Vagina (tissue), 2 donors: ENCODE measurements at regions of chr5 and their contacts with region 1.

Region 1: GRCh38 chr5:116766470-116766947 is 191.9 kb upstream of the SEMA6A start:
- DNase-seq: peak in 1 of 2 donors; percentile 93
- H3K4me3 ChIP-seq: no peak overlapping the region
- H3K27ac ChIP-seq: no peak overlapping the region
- H3K4me1 ChIP-seq: peaks cover 8% of the 10 kb centered on the region
- H3K27me3 ChIP-seq: no peaks in the 10 kb centered on the region
- CTCF ChIP-seq: no peak
- POLR2A ChIP-seq: no peak

Region 2: DNA sequence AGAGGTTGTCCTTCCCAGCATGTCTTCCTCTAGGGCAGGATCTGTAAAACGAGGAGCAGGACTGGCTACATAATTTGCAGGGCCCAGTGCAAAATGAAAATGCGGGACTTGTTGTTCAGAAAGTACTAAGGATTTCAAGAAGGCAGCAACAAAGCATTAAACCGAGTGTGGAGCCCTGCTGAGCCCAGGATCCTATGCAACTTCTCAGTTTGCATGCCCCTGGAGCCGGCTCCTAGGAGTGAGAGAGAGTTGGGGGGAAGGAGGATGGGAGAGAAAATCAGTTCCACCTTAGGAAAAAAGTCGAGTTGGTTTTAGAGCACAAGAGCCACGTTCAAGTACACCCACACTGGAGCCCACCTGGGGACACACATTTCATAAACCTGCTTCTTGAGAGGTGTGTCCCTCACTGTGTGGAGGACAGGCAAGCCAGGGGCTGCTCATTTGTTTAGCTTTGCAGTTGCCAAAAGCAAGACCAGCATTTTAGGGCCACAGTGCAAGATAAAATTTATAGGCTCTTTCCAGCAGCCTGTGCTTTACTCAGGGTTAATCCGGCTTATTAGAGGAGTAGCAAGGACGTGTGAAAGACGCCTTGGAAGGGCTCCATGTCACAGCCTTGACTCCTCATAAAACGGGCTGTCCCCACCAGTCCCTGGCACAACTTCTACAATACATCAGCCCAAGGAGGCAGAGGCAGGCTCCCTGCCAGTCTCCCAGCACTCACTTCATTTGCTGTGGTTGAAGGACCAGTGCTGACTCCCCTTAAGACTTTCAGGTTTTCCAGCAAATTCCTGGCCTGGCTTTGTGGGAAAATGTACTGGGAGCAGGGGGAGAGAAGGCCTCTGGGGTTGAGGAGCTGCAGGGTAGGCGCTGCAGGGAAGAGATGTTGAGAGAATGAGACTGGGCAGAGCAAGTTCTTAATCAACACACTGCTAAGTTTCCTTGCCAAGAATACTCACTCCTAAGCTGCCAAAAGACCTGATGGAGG is 32.2 kb before region 1 on chr5:
- intact Hi-C with region 1: no loop called
- DNase-seq: no peak
- H3K4me3 ChIP-seq: no peak overlapping the region
- H3K27ac ChIP-seq: no peak overlapping the region
- H3K4me1 ChIP-seq: peaks cover 30% of the 10 kb centered on the region
- H3K27me3 ChIP-seq: no peaks in the 10 kb centered on the region
- CTCF ChIP-seq: no peak
- POLR2A ChIP-seq: no peak

Region 3: DNA sequence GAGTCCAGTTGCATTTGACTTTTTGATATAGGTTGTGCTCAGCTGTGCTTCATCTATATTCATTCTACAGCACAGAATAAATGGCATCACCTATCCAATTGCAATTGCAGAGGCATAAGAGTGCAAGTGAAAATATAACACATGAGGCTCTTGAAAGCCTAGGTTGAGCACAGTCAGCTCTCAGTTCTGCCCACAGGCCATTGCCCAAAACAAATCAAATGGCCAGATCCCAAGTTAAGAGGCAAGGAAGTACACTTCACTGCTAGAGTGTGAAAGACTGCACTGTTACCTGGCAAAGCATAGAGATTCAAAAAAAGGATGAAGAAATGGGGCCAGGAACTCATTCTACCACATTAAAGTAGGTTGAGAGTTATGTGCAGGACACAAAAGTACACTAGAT is 113.6 kb after region 1 on chr5:
- intact Hi-C with region 1: no loop called
- DNase-seq: no peak
- H3K4me3 ChIP-seq: no peak overlapping the region
- H3K27ac ChIP-seq: no peak overlapping the region
- H3K4me1 ChIP-seq: no peaks in the 10 kb centered on the region
- H3K27me3 ChIP-seq: no peaks in the 10 kb centered on the region
- CTCF ChIP-seq: no peak
- POLR2A ChIP-seq: no peak

Region 4: DNA sequence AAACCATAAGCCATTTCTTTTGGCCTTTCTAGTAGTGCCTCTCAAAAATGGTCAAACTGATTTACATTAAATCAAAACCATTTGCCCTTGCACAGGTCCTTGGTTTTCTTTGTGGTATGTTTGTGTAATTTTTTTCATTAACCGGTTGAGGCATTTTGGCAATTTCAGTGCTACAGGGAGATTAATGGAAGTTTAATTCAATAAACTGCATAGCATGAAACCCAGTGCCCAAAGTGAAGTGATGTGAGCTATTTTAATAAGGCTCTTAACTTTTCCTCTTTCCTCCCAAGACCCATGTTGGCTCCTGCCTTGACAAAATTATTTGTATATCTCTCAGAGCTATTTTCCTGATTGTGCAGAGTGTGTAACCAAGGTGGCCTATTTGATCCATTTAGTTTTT is 134.3 kb after region 1 on chr5:
- intact Hi-C with region 1: loop called (anchors 5 kb)
- DNase-seq: no peak
- H3K4me3 ChIP-seq: no peak overlapping the region
- H3K27ac ChIP-seq: no peak overlapping the region
- H3K4me1 ChIP-seq: no peaks in the 10 kb centered on the region
- H3K27me3 ChIP-seq: no peaks in the 10 kb centered on the region
- CTCF ChIP-seq: no peak
- POLR2A ChIP-seq: no peak